ENCODE measurements at regions of chr12 and their contacts with region 1.

Region 1: DNA sequence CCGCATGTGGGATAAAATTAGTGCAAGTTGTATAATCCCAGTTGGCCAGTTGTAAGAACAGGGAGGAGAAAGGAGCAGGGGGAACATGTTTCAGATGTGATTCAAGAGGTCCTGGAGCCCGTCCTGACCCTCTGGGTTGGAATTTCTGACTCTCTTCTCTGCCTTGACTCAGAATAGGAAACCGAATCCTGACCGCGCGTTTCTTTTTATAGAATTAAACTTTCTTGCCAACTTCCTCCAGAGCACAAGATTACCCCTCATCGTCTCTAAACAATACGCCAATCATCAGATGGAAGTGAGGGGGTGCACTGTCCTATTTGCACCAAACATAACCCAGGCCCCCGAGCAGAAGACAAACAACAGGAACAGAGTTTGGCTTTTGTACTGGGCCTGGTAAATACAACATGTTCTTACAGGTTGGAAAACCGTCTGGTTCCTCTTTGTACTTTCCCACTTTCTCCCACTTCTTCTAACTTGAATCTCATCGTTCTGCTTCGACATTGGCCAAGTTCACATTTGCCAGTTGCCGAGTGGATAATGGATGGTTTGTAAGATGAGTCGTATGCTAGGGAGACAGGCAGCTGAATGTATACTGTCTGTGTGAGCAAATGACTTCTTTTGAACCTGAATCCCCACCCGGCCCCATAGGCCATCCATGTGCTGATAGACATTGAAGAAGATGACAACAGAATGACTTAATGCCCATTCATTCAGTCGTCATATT is 42.6 kb upstream of the MED13L start:
- DNase-seq: peak; percentile 95
- H3K4me3 ChIP-seq: peak overlapping the region in 3 of 4 donors; percentile 31 to 39 (median 36)
- H3K27ac ChIP-seq: peak overlapping the region; percentile 83 to 86 (median 84)
- H3K4me1 ChIP-seq: peaks cover 30 to 50% (median 41%) of the 10 kb centered on the region in 4 donors
- H3K27me3 ChIP-seq: no peaks in the 10 kb centered on the region
- CTCF ChIP-seq: no peak
- EP300 ChIP-seq: peak; percentile 22
- POLR2A ChIP-seq: no peak

Region 2: GRCh38 chr12:116434155-116435011 is 114.3 kb after region 1 on chr12:
- intact Hi-C with region 1: loop called (anchors 10 kb)
- DNase-seq: peak; percentile 97
- H3K4me3 ChIP-seq: peak overlapping the region; percentile 26 to 53 (median 36)
- H3K27ac ChIP-seq: peak overlapping the region; percentile 74 to 85 (median 83)
- H3K4me1 ChIP-seq: peaks cover 12 to 48% (median 36%) of the 10 kb centered on the region in 4 donors
- H3K27me3 ChIP-seq: no peaks in the 10 kb centered on the region
- CTCF ChIP-seq: no peak
- EP300 ChIP-seq: peak; percentile 87
- POLR2A ChIP-seq: no peak

Measured in esophagus muscularis mucosa (tissue), 4 donors.